ENCODE measurements at regions of chr17 and their contacts with region 1.

Region 1: GRCh38 chr17:46193626-46194392 is 580 bp upstream of the KANSL1 start:
- DNase-seq: peak; percentile 97 to 100
- ATAC-seq: peak; percentile 84 to 97
- H3K4me3 ChIP-seq: peak overlapping the region; percentile 65
- H3K27ac ChIP-seq: peak overlapping the region; percentile 90 to 97
- H3K4me1 ChIP-seq: peaks cover 49% of the 10 kb centered on the region
- CTCF ChIP-seq: peak; percentile 80
- EP300 ChIP-seq: no peak
- POLR2A ChIP-seq: peak; percentile 88
- RAD21 ChIP-seq: peak in 1 of 2 experiments; percentile 20; a peak in 2 of 5 replicates

Region 2: DNA sequence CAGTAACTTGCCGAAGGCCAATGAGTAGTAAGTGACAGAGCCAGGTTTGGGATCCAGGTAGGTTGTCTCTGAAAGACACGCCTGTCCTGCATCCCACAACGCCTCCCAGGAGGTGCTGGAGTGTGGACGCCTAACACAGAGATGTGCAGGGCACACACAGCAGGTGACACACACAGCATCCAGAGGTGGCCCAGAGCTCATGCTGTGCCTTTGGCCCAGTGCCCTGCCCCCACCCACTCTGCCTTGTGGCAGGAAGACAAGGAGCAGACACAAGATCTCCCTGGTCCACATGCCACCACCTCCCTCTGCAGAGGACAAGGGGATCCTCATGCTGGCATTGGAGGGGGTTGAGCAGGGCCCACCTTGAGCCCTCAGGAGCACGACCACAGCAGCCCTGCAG is 209.4 kb before region 1 on chr17:
- CTCF ChIA-PET with region 1: no interaction called
- POLR2A ChIA-PET with region 1: no interaction called
- DNase-seq: no peak
- ATAC-seq: no peak
- H3K4me3 ChIP-seq: no peak overlapping the region
- H3K27ac ChIP-seq: no peak overlapping the region
- H3K4me1 ChIP-seq: no peaks in the 10 kb centered on the region
- CTCF ChIP-seq: no peak
- EP300 ChIP-seq: no peak
- POLR2A ChIP-seq: no peak
- RAD21 ChIP-seq: no peak

Region 3: DNA sequence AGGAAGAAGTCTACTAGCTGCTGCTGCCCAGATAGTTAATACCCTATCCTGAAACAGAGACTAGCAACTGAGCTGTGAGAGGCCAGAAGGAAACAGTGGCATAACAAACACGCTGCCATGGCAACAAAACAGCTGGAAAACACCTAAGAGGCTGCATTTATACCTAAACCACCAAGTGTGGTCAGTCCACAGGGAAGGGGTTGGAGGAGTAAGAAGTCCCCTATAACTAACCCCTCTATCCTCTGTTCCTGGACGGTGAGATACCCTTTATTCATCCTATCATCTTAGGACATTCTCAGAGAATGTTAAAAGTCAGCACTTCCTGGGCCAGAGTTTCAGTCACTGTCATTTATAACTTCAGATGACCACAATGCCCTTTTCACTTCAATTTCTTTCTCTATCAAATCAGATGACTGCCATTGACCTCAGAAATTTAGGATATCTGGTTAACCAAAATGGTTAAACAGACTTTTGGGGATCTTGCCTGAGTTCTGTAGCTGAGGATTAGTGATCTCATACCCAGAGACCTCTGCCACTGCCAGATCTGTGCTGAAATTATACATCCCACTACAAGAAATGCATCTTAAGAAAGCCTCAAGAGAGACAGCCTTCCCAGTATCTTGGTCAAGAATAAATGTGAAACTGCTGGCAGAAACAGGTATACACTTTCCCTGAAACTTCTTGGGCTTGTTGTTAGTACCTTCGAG is 158.5 kb before region 1 on chr17:
- CTCF ChIA-PET with region 1: interaction called, 83 read pairs
- POLR2A ChIA-PET with region 1: no interaction called
- DNase-seq: no peak
- ATAC-seq: no peak; a peak in 1 of 6 replicates
- H3K4me3 ChIP-seq: no peak overlapping the region
- H3K27ac ChIP-seq: no peak overlapping the region
- H3K4me1 ChIP-seq: no peaks in the 10 kb centered on the region
- CTCF ChIP-seq: no peak
- EP300 ChIP-seq: no peak
- POLR2A ChIP-seq: no peak
- RAD21 ChIP-seq: no peak

Region 4: DNA sequence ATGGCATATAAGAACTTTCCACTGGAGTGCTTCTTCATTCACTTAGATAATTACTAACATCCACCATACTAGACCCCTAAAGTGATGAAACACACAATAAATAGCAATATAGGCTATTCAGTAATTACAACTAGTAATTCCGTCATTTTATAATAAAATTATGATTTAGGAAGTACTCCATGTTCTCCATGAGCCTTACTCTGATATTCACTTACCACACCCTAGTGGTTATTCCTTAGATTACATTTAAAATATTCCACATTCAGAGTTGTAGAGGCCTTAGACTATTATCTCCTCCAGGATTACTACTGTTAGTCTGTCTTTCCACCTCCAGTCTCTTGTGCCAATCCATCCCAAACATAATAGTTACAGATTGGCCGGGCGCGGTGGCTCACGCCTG is 132.4 kb before region 1 on chr17:
- CTCF ChIA-PET with region 1: interaction called, 28 read pairs
- POLR2A ChIA-PET with region 1: interaction called, 5 read pairs
- DNase-seq: peak; percentile 42 to 49
- ATAC-seq: peak in 1 of 2 experiments; percentile 52; a peak in 3 of 6 replicates
- H3K4me3 ChIP-seq: no peak overlapping the region
- H3K27ac ChIP-seq: no peak overlapping the region
- H3K4me1 ChIP-seq: peaks cover 86% of the 10 kb centered on the region
- CTCF ChIP-seq: peak; percentile 46; the same call in 2 of the 3 replicates
- EP300 ChIP-seq: no peak
- POLR2A ChIP-seq: no peak
- RAD21 ChIP-seq: peak in 1 of 2 experiments; percentile 55; a peak in 4 of 5 replicates

Region 5: GRCh38 chr17:46089389-46089965 is 104.3 kb before region 1 on chr17:
- CTCF ChIA-PET with region 1: interaction called, 27 read pairs
- POLR2A ChIA-PET with region 1: no interaction called
- DNase-seq: no peak
- ATAC-seq: no peak
- H3K4me3 ChIP-seq: no peak overlapping the region
- H3K27ac ChIP-seq: no peak overlapping the region
- H3K4me1 ChIP-seq: peaks cover 10% of the 10 kb centered on the region; the same call in 2 of the 3 replicates
- CTCF ChIP-seq: no peak
- EP300 ChIP-seq: no peak
- POLR2A ChIP-seq: no peak
- RAD21 ChIP-seq: no peak

Region 6: DNA sequence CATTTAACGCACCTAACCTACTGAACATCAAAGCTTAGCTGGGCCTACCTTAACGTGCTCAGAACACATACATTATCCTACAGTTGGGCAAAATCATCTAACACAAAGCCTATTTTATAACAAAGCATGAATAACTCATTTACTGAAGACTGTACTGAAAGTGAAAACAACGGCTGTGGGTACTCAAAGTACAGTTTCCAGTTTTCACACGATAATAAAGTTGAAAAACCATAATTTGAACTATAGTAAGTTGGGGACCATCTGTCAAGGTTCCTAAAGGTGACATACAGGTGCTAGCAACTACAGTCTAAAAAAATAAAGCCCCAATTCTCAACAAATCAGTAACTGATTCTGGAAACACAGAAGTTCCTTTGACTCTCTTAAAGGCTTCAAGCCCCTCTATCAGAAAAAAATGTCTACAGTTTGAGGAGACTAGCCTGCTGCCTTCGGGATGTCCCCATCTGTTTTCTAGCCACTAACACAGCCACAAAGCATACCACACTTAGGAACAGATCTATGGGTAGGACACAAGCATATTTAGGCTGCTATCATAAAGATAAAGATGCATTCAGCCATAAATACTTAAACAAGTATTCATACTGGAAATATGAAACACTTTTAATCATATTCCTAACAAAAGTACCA is 71.8 kb before region 1 on chr17:
- CTCF ChIA-PET with region 1: interaction called, 68 read pairs
- POLR2A ChIA-PET with region 1: interaction called, 3 read pairs
- DNase-seq: no peak
- ATAC-seq: no peak
- H3K4me3 ChIP-seq: no peak overlapping the region
- H3K27ac ChIP-seq: no peak overlapping the region
- H3K4me1 ChIP-seq: peaks cover 24% of the 10 kb centered on the region
- CTCF ChIP-seq: no peak
- EP300 ChIP-seq: no peak
- POLR2A ChIP-seq: no peak
- RAD21 ChIP-seq: no peak

Region 7: GRCh38 chr17:46167826-46168569 is 25.8 kb before region 1 on chr17:
- CTCF ChIA-PET with region 1: interaction called, 205 read pairs
- POLR2A ChIA-PET with region 1: interaction called, 4 read pairs
- DNase-seq: peak in 1 of 2 experiments; percentile 61
- ATAC-seq: peak in 1 of 2 experiments; percentile 64; a peak in 3 of 6 replicates
- H3K4me3 ChIP-seq: peak overlapping the region; percentile 6; the same call in 1 of the 3 replicates
- H3K27ac ChIP-seq: peak overlapping the region; percentile 47 to 51
- H3K4me1 ChIP-seq: peaks cover 54% of the 10 kb centered on the region
- CTCF ChIP-seq: no peak
- EP300 ChIP-seq: no peak
- POLR2A ChIP-seq: no peak
- RAD21 ChIP-seq: no peak

Region 8: DNA sequence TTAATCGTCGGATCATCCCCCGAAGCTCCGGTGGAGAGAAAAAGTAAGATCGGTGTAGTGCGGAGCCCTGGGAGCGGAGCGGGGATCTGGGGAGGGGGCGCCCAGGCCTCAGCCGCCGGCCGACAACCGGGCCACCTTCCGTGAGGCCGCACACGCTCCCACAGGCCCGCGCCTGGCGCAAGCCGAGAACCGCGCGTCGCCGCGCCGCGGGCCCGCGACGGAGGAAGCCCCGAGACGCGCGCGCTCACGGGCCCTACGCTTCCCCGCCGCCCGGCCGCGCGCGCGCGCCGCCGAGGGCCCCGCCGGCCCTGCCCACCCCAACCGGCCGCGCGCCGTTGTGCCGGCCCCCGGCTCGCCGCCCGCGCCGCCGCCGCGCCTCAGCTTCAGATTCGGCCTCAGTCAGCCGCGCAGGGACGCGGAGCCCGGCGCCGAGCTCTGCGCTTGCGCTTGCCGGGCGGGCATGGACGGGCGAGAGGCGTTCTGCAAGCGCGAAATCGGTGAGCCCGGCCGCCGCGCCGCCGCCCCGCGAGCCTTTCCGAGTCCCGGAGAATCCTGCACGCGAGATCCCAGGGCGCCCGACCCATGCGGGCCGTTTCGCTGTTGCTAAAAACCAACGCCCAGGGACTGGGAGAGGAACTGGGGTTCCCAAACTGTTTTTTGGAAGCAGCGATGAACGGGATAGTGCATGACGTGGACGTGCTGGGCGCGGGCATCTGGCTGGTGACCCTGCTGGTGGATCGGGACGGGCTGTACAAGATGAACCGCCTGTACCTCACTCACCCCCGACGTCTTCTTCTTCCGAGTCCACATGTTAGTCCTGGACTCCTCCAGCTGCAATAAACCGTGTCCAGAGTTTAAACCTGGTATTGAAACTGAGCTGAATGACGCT is 73.1 kb after region 1 on chr17:
- CTCF ChIA-PET with region 1: interaction called, 22 read pairs
- POLR2A ChIA-PET with region 1: interaction called, 12 read pairs
- DNase-seq: peak; percentile 94 to 98
- ATAC-seq: peak; percentile 88 to 93
- H3K4me3 ChIP-seq: peak overlapping the region; percentile 58
- H3K27ac ChIP-seq: peak overlapping the region; percentile 87 to 88
- H3K4me1 ChIP-seq: peaks cover 20% of the 10 kb centered on the region; the same call in 2 of the 3 replicates
- CTCF ChIP-seq: peak; percentile 6; the same call in 1 of the 3 replicates
- EP300 ChIP-seq: no peak
- POLR2A ChIP-seq: peak; percentile 80
- RAD21 ChIP-seq: peak in 1 of 2 experiments; percentile 34; a peak in 1 of 5 replicates